Gastrocnemius medialis (tissue), 4 donors: ENCODE measurements at regions of chr15 and their contacts with region 1.

Region 1: GRCh38 chr15:77024271-77025082 is 29.6 kb downstream of the PSTPIP1 start:
- DNase-seq: peak in 1 of 2 donors; percentile 56
- ATAC-seq: peak; percentile 58 to 72
- H3K4me3 ChIP-seq: no peak overlapping the region
- H3K27ac ChIP-seq: no peak overlapping the region
- H3K4me1 ChIP-seq: peaks cover 0 to 10% of the 10 kb centered on the region in 2 donors
- H3K27me3 ChIP-seq: no peaks in the 10 kb centered on the region
- CTCF ChIP-seq: peak; percentile 86 to 98 (median 95)
- POLR2A ChIP-seq: no peak

Region 2: GRCh38 chr15:76546803-76547202 is 477.7 kb before region 1 on chr15:
- in situ Hi-C with region 1: no loop called
- intact Hi-C with region 1: no loop called
- DNase-seq: no peak
- ATAC-seq: no peak
- H3K4me3 ChIP-seq: no peak overlapping the region
- H3K27ac ChIP-seq: no peak overlapping the region
- H3K4me1 ChIP-seq: no peaks in the 10 kb centered on the region
- H3K27me3 ChIP-seq: no peaks in the 10 kb centered on the region
- CTCF ChIP-seq: no peak
- POLR2A ChIP-seq: no peak

Region 3: GRCh38 chr15:77083381-77084162 is 59.1 kb after region 1 on chr15:
- in situ Hi-C with region 1: no loop called
- intact Hi-C with region 1: loop called (anchors 2 kb)
- DNase-seq: peak in 1 of 2 donors; percentile 87
- ATAC-seq: peak; percentile 68 to 89
- H3K4me3 ChIP-seq: peak overlapping the region; percentile 21 to 51 (median 32)
- H3K27ac ChIP-seq: peak overlapping the region in 3 of 4 donors; percentile 6 to 67 (median 29)
- H3K4me1 ChIP-seq: peaks cover 10 to 11% of the 10 kb centered on the region in 2 donors
- H3K27me3 ChIP-seq: no peaks in the 10 kb centered on the region
- CTCF ChIP-seq: no peak
- POLR2A ChIP-seq: no peak

Region 4: DNA sequence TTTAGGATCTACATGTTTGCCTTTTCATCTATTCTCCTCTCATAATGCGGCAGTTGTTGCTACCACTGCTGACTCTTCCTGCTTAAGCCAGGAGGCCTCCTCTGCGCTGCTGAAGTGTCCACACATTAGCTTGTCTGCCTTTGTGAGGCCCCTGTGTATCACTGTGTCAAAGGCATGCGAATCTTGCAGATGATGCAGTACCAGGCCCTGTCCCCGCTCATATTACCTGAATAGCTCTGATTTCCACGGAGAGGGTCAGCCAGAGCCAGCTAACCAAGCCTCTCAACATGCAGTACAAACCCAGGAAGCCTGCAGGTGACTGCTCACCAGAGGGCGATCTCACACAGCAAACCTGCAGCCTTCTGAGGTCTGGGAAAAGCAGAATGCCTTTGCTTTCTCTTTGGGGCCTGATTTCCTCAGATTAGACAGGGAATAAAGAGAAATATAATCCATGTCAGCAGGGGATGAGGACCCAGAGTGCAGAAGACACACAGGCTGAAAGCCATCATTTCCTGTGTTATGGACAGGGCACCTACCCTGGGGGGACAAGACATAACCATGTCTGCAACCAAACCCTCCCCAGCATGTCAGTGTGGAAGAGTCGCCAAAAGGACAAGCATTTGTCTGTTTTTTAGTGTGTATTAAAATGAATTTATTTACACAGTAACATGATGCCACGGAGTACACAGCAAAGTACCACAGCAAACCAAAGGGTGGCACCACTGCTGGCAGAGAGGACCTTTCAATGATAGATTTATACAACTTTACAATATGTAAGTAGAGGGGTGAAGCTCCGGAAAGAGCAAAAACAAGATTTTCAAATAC is 83.3 kb after region 1 on chr15:
- in situ Hi-C with region 1: loop called in 1 of 4 experiments (anchors 10 kb)
- intact Hi-C with region 1: loop called (anchors 5 kb)
- DNase-seq: peak; percentile 18 to 70
- ATAC-seq: peak; percentile 70 to 89
- H3K4me3 ChIP-seq: no peak overlapping the region
- H3K27ac ChIP-seq: peak overlapping the region in 2 of 4 donors; percentile 14 to 60
- H3K4me1 ChIP-seq: peaks cover 20 to 34% of the 10 kb centered on the region in 2 donors
- H3K27me3 ChIP-seq: no peaks in the 10 kb centered on the region
- CTCF ChIP-seq: peak; percentile 55 to 77 (median 67)
- POLR2A ChIP-seq: no peak

Region 5: DNA sequence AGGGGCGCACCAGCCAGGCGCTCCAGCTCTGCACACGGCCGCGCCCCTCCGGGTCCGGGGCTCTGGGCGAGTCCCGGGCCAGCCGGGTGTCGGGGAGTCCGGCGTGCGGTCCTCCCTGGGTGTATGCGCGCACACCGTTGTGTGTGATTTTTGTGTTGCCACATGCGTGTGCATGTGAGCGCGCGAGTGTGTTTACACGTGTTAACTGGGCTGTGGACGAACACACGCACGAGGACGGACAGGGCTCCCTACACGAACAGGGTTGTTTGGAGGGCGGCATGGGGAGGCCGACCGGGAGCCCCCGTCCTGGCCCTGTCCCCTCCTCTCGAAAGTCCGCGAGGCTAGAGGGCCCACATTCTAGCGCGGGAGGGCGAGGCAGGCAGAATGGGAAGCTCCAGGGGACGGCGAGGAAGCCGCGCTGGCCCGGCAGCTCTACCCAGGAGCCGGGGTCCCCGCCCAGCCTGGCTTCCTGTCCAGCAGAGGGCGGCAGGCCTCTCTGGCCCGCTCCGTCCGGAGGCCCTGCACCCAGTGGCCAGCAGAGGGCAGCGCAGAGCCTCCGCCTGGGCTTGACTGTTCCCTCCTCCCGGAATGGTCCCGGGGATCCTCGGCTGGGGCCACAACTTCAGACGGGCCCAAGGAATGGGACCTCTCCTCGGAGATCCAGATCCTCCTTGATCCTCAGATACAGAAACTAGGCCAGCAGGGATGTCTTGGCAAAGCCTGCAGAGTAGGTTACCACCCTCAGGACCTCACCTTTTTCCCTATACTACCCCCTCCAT is 608.8 kb after region 1 on chr15:
- in situ Hi-C with region 1: no loop called
- intact Hi-C with region 1: loop called (anchors 10 kb)
- DNase-seq: peak; percentile 54 to 68
- ATAC-seq: peak; percentile 77 to 86
- H3K4me3 ChIP-seq: peak overlapping the region; percentile 54 to 73 (median 60)
- H3K27ac ChIP-seq: no peak overlapping the region
- H3K4me1 ChIP-seq: peaks cover 0 to 11% of the 10 kb centered on the region in 2 donors
- H3K27me3 ChIP-seq: peaks cover 42 to 48% (median 45%) of the 10 kb centered on the region in 3 donors
- CTCF ChIP-seq: peak; percentile 88 to 100 (median 96)
- POLR2A ChIP-seq: no peak